Mammary epithelial cell (primary cell): ENCODE measurements at regions of chr13 and their contacts with region 1.

Region 1: DNA sequence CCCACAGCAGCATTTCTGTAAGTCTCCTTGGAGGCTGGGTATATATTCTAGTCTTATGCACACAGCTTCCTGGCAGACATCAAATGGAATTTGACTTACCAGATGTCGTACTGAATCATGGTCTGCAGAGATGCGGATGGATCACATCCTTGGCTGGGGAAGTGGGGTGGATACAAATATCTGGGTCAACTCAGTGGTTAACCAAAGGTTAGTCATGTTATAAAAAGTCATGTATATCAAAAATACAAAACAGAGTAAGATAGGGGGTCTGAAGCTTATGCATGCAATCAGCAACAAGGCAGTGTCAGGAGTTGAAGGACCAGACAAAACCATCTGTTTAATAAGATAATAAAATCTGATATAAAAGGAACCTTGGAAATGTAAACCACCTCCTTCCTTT is 61.9 kb downstream of the WASF3 start:
- DNase-seq: peak; percentile 74
- H3K4me3 ChIP-seq: no peak overlapping the region
- H3K27ac ChIP-seq: no peak overlapping the region
- H3K4me1 ChIP-seq: peaks cover 36% of the 10 kb centered on the region
- H3K27me3 ChIP-seq: no peaks in the 10 kb centered on the region
- CTCF ChIP-seq: no peak

Region 2: DNA sequence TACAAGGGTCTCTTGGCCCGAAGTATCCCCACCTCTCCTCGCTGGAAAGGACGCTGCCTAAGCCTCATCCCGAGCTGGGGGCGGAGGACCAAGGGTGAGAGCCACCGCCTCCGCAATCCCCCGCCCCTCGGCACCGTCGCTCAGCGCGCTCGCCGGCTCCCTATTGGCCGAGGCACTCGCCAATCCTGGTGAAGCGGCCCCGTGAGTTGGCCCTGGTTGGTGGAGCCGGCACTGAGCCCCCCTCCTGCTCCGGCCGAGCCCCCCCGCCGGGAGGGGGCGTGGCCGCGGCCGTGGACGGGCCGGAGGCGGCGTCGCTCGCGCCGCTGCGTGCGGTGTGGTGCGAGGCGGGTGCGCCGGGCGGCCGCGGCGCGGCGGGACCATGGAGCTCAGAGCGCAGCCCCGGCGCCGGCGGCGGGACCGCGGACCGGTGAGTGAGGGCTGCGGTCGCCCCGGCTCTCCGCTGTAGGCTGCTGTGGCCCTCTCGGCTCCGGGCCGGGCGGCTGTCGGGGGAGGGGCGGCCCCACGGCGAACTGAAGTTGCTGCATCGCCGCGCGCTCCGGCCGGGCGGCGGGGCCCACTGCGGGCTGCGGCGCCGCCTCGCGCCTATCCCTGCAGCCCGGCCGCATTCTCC is 61.9 kb before region 1 on chr13 and contains the start of gene WASF3:
- CTCF ChIA-PET with region 1: no interaction called
- dilution Hi-C with region 1: no loop called
- in situ Hi-C with region 1: no loop called
- intact Hi-C with region 1: loop called (anchors 5 kb)
- DNase-seq: peak; percentile 92
- H3K4me3 ChIP-seq: peak within 1 kb of the TSS; percentile 68 to 79 (median 74)
- H3K27ac ChIP-seq: no peak within 1 kb of the TSS
- H3K4me1 ChIP-seq: no peaks in the 10 kb centered on the region
- H3K27me3 ChIP-seq: no peaks in the 10 kb centered on the region
- CTCF ChIP-seq: no peak
- total RNA-seq, gene WASF3: 7.7 to 19.4 TPM

Region 3: GRCh38 chr13:26646603-26647002 is 27.2 kb after region 1 on chr13:
- CTCF ChIA-PET with region 1: no interaction called
- dilution Hi-C with region 1: no loop called
- in situ Hi-C with region 1: no loop called
- intact Hi-C with region 1: no loop called
- DNase-seq: no peak
- H3K4me3 ChIP-seq: no peak overlapping the region
- H3K27ac ChIP-seq: no peak overlapping the region
- H3K4me1 ChIP-seq: no peaks in the 10 kb centered on the region
- H3K27me3 ChIP-seq: no peaks in the 10 kb centered on the region
- CTCF ChIP-seq: no peak